PC-9 (cell line): ENCODE measurements at regions of chr2 and their contacts with region 1.

Region 1: GRCh38 chr2:72887754-72888437 is 688 bp downstream of the SPR start:
- DNase-seq: peak; percentile 80 to 83
- H3K4me3 ChIP-seq: peak overlapping the region; percentile 85
- H3K27ac ChIP-seq: no peak overlapping the region
- H3K4me1 ChIP-seq: peaks cover 22% of the 10 kb centered on the region
- H3K27me3 ChIP-seq: no peaks in the 10 kb centered on the region
- CTCF ChIP-seq: peak; percentile 92

Region 2: GRCh38 chr2:72770879-72771461 is 116.9 kb before region 1 on chr2:
- CTCF ChIA-PET with region 1: no interaction called
- POLR2A ChIA-PET with region 1: no interaction called
- intact Hi-C with region 1: loop called (anchors 1 kb)
- DNase-seq: peak; percentile 48 to 71
- H3K4me3 ChIP-seq: no peak overlapping the region
- H3K27ac ChIP-seq: no peak overlapping the region
- H3K4me1 ChIP-seq: peaks cover 5% of the 10 kb centered on the region; the same call in 1 of the 2 replicates
- H3K27me3 ChIP-seq: no peaks in the 10 kb centered on the region
- CTCF ChIP-seq: peak; percentile 95

Region 3: DNA sequence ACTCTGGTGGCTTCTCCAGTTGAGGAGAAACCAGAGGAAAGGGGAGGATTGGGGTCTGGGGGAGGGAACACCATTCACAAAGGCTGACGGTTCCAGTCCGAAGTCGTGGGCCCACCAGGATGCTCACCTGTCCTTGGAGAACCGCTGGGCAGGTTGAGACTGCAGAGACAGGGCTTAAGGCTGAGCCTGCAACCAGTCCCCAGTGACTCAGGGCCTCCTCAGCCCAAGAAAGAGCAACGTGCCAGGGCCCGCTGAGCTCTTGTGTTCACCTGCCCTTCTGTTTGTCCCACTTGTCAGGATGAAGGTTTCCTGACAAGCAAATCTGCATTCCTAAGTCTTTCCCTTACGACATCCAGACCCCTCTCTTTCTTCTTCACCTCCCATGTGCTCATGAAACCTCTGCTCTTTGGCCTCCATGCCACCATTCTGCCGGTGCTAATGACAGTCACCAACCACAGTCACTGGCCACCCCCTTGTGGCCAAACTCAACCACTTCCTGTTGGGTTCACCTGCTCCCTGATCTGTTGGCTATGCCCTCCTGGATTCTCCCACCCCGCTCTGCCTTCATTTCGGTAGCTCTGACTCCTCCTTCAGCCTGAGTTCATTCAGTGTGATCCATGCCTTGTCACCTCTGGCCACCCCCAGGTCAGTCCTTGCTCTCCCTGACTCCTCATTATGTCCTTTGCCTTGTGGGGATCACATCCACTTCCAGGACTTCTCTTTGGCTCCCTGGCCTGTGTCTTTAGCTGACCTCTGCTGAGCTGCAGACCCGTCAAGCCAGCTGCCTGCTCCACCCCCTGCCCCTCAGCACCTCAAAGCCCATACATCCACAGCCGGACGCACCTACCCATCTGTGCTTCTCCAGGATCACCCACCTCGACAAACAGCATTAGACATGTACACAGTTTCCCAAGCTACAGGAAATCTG is 47.1 kb after region 1 on chr2:
- CTCF ChIA-PET with region 1: no interaction called
- POLR2A ChIA-PET with region 1: no interaction called
- intact Hi-C with region 1: loop called (anchors 1 kb)
- DNase-seq: peak in 1 of 2 experiments; percentile 30
- H3K4me3 ChIP-seq: no peak overlapping the region
- H3K27ac ChIP-seq: no peak overlapping the region
- H3K4me1 ChIP-seq: no peaks in the 10 kb centered on the region
- H3K27me3 ChIP-seq: peaks cover 24% of the 10 kb centered on the region; the same call in 1 of the 2 replicates
- CTCF ChIP-seq: peak; percentile 73

Region 4: DNA sequence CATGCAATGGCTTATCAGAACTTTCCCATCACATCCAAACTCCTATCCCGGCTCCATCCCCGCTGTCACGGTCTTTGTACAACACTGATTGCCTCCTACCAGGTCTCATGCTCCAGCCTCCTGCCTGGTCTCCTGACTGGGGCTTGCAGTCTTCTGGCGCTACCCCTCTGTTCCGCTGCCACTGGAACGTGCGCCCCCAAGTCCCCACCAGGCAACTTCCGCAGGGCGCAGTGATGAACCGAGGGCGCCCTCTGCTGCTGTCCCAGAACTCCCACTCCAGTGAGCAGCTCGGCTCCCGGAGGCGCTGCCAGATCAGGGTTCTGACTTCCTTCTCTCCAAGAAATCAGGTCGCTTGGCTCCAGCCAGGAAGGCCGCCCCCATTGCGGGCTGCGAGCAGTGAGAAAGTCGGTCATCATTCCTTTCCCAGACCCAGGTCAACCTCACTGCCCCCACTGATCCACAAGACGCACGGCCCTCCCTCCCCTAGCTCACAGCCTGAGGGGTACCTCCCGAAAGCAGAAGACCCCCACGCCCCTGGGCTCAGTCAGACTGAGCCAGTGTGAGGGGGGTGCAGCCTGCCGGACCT is 268.7 kb after region 1 on chr2:
- CTCF ChIA-PET with region 1: interaction called, 10 read pairs
- POLR2A ChIA-PET with region 1: no interaction called
- intact Hi-C with region 1: no loop called
- DNase-seq: peak in 1 of 2 experiments; percentile 34
- H3K4me3 ChIP-seq: no peak overlapping the region
- H3K27ac ChIP-seq: no peak overlapping the region
- H3K4me1 ChIP-seq: no peaks in the 10 kb centered on the region
- H3K27me3 ChIP-seq: peaks cover 23% of the 10 kb centered on the region
- CTCF ChIP-seq: peak; percentile 56

Region 5: GRCh38 chr2:73176881-73177644 is 289.2 kb after region 1 on chr2:
- CTCF ChIA-PET with region 1: interaction called, 10 read pairs
- POLR2A ChIA-PET with region 1: no interaction called
- intact Hi-C with region 1: loop called (anchors 5 kb)
- DNase-seq: peak; percentile 63 to 83
- H3K4me3 ChIP-seq: peak overlapping the region; percentile 61
- H3K27ac ChIP-seq: no peak overlapping the region
- H3K4me1 ChIP-seq: peaks cover 19% of the 10 kb centered on the region
- H3K27me3 ChIP-seq: peaks cover 55% of the 10 kb centered on the region
- CTCF ChIP-seq: peak; percentile 99